ENCODE measurements at regions of chr3 and their contacts with region 1.

Region 1: DNA sequence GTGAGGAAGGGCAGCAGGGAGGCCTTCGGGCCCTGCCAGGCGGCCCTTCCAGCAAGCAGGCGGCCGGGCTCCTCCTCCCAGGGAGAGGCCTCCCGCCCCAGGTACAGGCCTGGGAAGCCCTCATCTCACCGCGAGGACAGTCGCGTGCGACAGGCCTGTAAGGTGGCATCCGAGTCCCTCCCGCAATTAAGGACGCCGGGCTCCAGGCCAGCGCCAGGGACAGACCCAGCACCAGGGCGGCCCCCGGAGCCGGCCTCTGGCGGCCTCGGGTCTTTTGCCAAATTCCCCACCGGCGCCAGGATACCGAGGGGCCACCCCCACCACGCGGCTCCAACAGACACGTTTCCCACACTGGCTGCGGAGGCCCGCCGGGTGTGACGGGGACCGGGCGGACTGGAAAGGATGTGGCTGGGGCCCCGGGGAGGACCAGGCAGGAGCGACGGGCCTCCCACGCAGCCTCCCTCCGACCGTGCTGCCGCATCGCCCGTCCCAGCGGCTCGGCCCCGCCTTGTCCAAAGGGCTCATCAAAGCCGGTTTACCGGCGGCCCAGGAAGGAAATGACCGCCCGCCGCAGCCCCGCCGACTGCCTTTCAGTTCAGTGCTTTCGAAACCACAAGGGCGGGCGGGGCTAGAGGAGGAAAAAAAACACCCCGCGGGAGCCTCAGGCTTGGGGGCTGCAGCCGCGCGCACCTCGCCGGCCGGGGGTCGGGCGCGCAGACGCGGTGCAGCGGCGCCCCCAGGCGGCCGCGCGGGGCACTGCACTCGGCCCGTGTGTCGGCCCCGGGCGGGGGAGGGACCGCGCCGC is 11.3 kb downstream of the XXYLT1 start:
- DNase-seq: peak; percentile 79 to 81
- H3K4me3 ChIP-seq: peak overlapping the region; percentile 54 to 91 (median 68)
- H3K27ac ChIP-seq: peak overlapping the region; percentile 88 to 98
- H3K4me1 ChIP-seq: peaks cover 0 to 6% of the 10 kb centered on the region in 2 donors
- H3K27me3 ChIP-seq: no peaks in the 10 kb centered on the region
- CTCF ChIP-seq: peak in 2 of 3 donors; percentile 21 to 100
- POLR2A ChIP-seq: no peak

Region 2: DNA sequence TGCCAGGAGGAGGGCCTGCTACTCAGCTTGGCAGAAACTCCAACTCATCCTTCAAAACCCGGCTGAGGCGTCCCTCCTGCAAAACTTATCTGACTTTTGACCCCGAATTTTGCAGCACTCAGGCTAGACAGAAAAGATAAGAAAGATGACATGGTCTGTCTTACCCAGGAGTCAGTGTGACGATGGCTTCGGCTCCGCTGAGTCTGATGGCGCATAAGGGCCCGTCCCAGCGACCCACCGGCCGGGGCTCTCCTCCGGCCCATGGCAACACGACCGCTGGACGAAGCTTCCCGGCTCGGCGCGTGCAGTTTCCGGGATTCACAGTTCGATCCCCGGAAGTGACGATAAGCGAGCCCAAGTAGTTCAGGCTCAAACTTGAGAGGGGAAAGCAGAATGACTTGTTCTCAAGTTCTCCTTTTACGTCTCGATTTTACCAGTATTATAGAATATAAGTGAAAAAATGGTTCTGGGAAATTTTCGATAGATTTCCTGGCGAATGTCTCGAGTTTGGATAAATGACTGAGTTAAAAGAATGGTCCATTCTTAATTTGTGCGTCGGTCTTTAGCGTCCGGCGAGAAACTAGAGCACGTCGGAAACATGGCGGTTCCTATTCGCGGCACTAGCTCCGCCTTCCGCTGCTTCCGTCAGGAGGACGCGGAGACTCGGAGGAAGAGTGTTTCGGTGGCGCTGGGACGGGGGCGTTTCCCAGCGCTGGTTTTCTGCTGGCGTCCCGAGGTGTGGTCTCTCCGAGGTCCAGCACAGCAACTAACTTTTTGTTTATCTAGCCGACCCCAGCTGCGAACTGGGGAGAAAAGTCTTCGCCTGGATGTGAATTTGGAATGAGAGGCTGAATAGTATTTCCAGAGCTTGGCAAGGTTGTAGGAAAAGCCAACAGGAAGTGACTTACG is 587.5 kb before region 1 on chr3 and contains the start of gene LSG1:
- intact Hi-C with region 1: loop called (anchors 5 kb)
- DNase-seq: peak; percentile 86 to 89
- H3K4me3 ChIP-seq: peak within 1 kb of the TSS; percentile 73 to 88 (median 76)
- H3K27ac ChIP-seq: peak within 1 kb of the TSS; percentile 87 to 93
- H3K4me1 ChIP-seq: peaks cover 0 to 13% of the 10 kb centered on the region in 2 donors
- H3K27me3 ChIP-seq: no peaks in the 10 kb centered on the region
- CTCF ChIP-seq: no peak
- POLR2A ChIP-seq: no peak
- total RNA-seq, gene LSG1: 34.9 to 62.3 (median 57.0) TPM

Region 3: DNA sequence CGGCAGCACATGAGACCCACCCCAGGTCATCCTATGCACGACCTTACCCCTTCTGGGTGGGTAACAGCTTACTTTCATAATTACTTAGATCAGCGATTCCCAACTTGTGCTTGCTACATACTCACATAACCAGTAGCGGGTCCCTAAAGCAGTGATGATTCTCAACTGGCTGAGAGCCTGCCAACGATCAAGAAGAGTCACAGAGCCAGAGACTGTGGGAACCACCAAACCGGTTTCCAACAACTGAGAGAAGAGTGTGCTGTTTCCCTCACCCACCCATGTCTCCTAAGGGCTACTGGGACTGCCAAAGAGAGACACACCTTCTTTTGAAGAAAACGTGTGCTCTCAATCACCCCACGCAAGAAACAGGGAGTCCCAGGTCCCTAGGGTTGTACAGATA is 23.3 kb after region 1 on chr3:
- intact Hi-C with region 1: no loop called
- DNase-seq: no peak
- H3K4me3 ChIP-seq: no peak overlapping the region
- H3K27ac ChIP-seq: no peak overlapping the region
- H3K4me1 ChIP-seq: no peaks in the 10 kb centered on the region
- H3K27me3 ChIP-seq: no peaks in the 10 kb centered on the region
- CTCF ChIP-seq: no peak
- POLR2A ChIP-seq: no peak